ENCODE measurements at regions of chr3 and their contacts with region 1.

Region 1: DNA sequence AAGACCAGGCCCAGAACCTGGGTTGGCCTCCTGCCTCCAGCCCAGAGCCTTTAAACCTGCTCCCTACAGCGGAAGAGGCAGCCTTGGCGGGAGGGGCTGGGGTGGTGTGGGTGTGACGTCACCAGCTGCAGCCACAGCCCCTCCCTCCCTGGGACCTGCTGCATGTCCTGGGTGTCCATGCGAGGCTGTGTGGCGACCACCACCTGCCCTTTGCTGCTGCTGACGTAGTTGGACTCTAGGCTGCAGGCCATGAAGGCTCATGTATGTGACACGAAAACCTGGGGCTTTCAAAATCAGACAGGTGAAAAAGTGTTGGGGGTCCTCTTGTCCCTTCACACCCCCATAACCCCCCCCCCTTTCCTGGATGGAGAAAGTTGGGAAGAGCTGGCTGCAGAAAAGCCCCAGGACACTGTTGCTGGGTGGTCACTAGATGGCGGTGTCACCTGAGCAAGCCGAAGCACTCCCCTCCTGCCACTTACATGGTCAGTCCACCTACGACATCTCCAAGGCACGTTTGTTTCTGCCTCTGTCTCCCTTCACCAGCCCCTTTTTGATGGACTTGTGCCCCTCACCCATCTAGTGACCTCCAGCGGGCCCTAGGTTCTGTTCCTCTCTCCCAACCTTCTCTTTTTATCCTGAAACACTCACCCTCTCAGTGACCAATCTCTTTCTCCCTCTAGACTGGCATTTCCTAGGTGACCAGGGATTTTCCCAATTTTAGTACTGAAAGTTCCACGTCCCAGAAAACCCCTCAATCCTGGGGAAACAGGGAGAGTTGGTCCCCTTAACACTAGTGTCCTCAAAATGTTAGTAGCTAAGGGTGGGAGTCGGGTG is 35.2 kb downstream of the SLC6A20 start:
- DNase-seq: peak in 4 of 10 donors; percentile 21 to 67 (median 38)
- H3K4me3 ChIP-seq: no peak overlapping the region
- H3K27ac ChIP-seq: no peak overlapping the region
- H3K27me3 ChIP-seq: peaks cover 0 to 8% (median 0%) of the 10 kb centered on the region in 45 donors
- CTCF ChIP-seq: peak in 55 of 56 donors; percentile 26 to 79 (median 62)

Region 2: GRCh38 chr3:45398178-45398577 is 362.9 kb before region 1 on chr3:
- intact Hi-C with region 1: no loop called
- DNase-seq: no peak
- H3K4me3 ChIP-seq: no peak overlapping the region
- H3K27ac ChIP-seq: no peak overlapping the region
- H3K27me3 ChIP-seq: no peaks in the 10 kb centered on the region
- CTCF ChIP-seq: no peak

Region 3: DNA sequence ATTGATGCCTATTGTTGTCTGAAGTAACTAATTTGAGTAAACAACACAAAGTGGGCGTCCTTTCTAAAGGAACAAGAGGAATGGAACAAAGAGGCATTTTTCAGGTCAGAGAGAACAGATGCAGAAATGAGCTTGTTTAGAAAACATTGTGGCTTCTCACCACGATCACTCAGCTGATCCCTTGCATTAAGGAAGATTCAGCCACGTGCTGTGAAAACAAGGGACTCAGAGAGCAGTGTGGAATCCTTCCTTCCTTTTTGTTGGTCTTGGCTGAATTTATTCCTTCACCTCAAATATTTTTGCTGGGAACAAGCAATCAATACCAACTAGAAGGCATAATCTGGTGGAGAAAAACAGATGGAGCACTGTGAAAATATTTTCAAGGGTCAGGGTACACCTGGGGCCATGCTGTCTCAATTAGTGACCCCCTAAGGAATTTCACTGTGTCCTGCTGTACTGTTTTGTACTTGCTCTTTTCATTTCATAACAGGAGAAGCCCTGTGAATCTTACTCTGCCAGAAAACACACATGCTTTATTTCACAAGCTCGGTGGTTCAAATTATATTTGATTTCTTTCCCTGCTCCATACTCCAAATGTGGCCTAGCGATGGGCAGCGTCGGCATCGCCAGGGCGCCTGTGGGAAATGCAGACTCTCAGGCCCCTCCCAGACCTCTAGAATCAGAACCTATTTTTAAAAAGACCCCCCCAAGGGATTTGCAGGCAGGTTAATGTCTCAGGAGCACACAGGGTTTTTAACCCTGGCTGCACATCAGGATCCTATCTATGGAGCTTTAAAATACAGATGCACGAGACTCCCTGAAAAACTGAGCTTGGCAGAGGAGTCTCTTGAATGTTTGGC is 46.8 kb after region 1 on chr3:
- intact Hi-C with region 1: no loop called
- DNase-seq: no peak
- H3K4me3 ChIP-seq: no peak overlapping the region
- H3K27ac ChIP-seq: peak overlapping the region in 58 of 59 donors; percentile 1 to 90 (median 70)
- H3K27me3 ChIP-seq: no peaks in the 10 kb centered on the region
- CTCF ChIP-seq: no peak

Region 4: DNA sequence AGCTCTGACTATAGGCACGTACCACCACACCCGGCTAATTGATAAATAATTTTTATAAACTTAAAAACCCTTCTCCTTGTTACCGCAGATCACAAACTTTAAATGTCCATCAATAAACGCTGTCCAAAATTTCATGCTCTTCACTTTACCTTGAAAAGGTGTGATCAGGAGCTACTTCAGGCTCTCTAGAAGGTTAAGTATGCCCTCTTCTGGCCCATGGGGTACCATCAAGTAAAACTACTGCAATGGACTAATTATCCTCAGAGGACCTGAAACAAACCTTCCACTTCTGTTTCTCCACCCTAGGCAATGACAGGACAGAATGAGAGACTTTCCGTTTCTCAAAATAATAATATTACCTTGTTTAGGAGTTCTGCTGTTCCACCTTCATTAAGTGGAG is 71.6 kb after region 1 on chr3:
- intact Hi-C with region 1: loop called in 1 of 2 experiments (anchors 10 kb)
- DNase-seq: no peak
- H3K4me3 ChIP-seq: no peak overlapping the region
- H3K27ac ChIP-seq: no peak overlapping the region
- H3K27me3 ChIP-seq: no peaks in the 10 kb centered on the region
- CTCF ChIP-seq: peak in 5 of 56 donors; percentile 16 to 49 (median 18)

Region 5: DNA sequence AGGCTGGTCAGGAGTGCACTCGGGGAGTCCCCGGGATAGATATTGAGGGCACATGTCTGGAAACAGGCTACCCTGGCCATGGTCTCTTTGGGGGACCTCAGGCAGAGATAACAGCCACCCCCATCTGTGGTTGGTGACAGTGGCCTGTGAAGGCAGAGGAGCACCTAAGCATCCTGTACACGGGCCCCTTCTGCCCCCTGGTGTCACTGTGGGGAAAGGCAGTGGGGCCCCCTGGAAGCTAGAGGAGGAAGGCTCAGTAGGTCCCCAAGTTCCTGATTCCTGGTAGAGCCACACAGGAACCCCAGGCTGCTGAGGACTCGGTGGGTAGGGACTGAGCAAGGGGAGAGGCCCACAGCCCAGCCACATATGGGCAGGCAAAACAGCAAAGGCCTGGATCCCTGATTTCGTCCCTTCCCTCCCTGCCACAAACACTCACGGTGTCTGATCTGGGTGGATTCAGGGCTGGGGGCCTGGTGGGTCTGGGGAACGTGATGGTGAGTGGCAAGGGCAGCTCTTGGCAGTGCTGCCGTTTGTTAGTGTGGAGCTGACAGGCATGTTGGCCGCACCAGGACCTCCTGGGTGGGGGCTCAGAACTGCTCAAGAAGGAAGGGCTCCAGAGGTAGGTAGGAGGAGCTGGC is 168.1 kb after region 1 on chr3:
- intact Hi-C with region 1: loop called (anchors 5 kb)
- DNase-seq: peak in 7 of 10 donors; percentile 37 to 66 (median 54)
- H3K4me3 ChIP-seq: no peak overlapping the region
- H3K27ac ChIP-seq: no peak overlapping the region
- H3K27me3 ChIP-seq: no peaks in the 10 kb centered on the region
- CTCF ChIP-seq: peak in 55 of 56 donors; percentile 30 to 78 (median 66)

Region 6: GRCh38 chr3:46228259-46229242 is 467.5 kb after region 1 on chr3:
- intact Hi-C with region 1: no loop called
- DNase-seq: no peak
- H3K4me3 ChIP-seq: no peak overlapping the region
- H3K27ac ChIP-seq: no peak overlapping the region
- H3K27me3 ChIP-seq: peaks cover 0 to 9% (median 0%) of the 10 kb centered on the region in 45 donors
- CTCF ChIP-seq: peak in 2 of 56 donors; percentile 14 to 16